ENCODE measurements at regions of chr17 and their contacts with region 1.

Region 1: DNA sequence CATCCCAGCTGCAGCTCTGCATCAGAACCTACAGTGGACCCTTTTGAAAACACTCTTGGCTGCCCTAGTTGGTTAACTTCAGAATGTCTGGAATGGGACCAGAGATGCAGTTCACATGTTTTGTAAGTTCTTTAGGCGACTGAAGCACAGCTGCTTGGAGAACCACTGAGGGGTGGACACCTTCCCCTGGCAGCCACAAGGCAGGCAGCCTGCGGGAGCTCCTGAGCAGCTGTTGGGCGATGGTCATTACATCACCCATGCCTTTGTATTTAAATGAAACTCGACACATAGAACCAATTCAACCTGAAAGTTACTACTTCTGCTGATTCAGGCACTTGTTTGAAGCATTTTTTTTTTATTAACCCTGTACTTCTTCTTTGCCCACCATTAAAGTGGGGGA is 151.5 kb downstream of the LGALS9B start:
- DNase-seq: no peak
- ATAC-seq: no peak
- H3K4me3 ChIP-seq: no peak overlapping the region
- H3K27ac ChIP-seq: no peak overlapping the region
- H3K4me1 ChIP-seq: no peaks in the 10 kb centered on the region
- H3K27me3 ChIP-seq: no peaks in the 10 kb centered on the region

Region 2: GRCh38 chr17:19546289-19547065 is 769.3 kb before region 1 on chr17:
- intact Hi-C with region 1: no loop called
- DNase-seq: peak; percentile 34 to 79 (median 66)
- ATAC-seq: peak; percentile 54 to 72
- H3K4me3 ChIP-seq: no peak overlapping the region
- H3K27ac ChIP-seq: no peak overlapping the region
- H3K4me1 ChIP-seq: no peaks in the 10 kb centered on the region
- H3K27me3 ChIP-seq: no peaks in the 10 kb centered on the region

Region 3: GRCh38 chr17:20226814-20227482 is 88.9 kb before region 1 on chr17:
- intact Hi-C with region 1: loop called in 3 of 4 experiments (anchors 5 to 10 kb)
- DNase-seq: peak; percentile 82 to 95 (median 93)
- ATAC-seq: peak; percentile 97 to 98
- H3K4me3 ChIP-seq: no peak overlapping the region
- H3K27ac ChIP-seq: no peak overlapping the region
- H3K4me1 ChIP-seq: no peaks in the 10 kb centered on the region
- H3K27me3 ChIP-seq: no peaks in the 10 kb centered on the region

Region 4: GRCh38 chr17:20273741-20274500 is 41.9 kb before region 1 on chr17:
- intact Hi-C with region 1: no loop called
- DNase-seq: no peak
- ATAC-seq: no peak
- H3K4me3 ChIP-seq: no peak overlapping the region
- H3K27ac ChIP-seq: no peak overlapping the region
- H3K4me1 ChIP-seq: no peaks in the 10 kb centered on the region
- H3K27me3 ChIP-seq: no peaks in the 10 kb centered on the region